ENCODE measurements at regions of chr7 and their contacts with region 1.

Region 1: DNA sequence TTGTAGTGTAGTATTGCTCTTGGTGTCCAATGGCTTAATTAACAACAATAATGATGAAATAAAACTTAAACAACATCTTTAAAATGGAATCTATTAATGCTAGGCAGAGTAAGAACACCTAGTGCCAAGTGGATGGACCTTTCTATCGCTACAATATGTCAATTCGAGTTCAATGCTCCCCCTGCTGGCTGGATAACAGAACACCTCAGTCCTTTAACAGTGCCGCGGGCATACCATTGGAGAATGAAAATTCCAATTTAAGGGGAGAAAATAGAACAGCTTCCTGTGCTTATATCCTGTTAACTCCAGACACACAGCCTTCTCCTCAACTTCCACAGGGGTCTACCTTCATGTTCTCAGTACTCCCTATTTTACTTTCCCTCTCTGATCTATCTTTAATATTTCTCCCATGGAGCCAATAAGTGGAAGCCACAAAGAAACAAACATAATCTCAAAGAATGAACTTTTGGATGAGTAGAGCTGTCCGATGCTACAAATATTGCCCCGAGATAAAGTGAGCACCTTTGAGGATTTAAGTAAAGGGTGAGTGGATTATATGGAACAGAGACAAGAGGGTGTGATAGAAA is 41.4 kb downstream of the COL1A2 start:
- DNase-seq: peak; percentile 66
- H3K4me3 Mint-ChIP-seq: no peak overlapping the region
- H3K27ac Mint-ChIP-seq: no peak overlapping the region
- H3K4me1 Mint-ChIP-seq: no peaks in the 10 kb centered on the region
- H3K27me3 Mint-ChIP-seq: no peaks in the 10 kb centered on the region
- CTCF ChIP-seq: peak; percentile 70

Region 2: GRCh38 chr7:94466516-94466915 is 30.4 kb after region 1 on chr7:
- CTCF ChIA-PET with region 1: no interaction called
- intact Hi-C with region 1: loop called (anchors 1 kb)
- DNase-seq: no peak
- H3K4me3 Mint-ChIP-seq: no peak overlapping the region
- H3K27ac Mint-ChIP-seq: no peak overlapping the region
- H3K4me1 Mint-ChIP-seq: no peaks in the 10 kb centered on the region
- H3K27me3 Mint-ChIP-seq: no peaks in the 10 kb centered on the region
- CTCF ChIP-seq: no peak

Region 3: DNA sequence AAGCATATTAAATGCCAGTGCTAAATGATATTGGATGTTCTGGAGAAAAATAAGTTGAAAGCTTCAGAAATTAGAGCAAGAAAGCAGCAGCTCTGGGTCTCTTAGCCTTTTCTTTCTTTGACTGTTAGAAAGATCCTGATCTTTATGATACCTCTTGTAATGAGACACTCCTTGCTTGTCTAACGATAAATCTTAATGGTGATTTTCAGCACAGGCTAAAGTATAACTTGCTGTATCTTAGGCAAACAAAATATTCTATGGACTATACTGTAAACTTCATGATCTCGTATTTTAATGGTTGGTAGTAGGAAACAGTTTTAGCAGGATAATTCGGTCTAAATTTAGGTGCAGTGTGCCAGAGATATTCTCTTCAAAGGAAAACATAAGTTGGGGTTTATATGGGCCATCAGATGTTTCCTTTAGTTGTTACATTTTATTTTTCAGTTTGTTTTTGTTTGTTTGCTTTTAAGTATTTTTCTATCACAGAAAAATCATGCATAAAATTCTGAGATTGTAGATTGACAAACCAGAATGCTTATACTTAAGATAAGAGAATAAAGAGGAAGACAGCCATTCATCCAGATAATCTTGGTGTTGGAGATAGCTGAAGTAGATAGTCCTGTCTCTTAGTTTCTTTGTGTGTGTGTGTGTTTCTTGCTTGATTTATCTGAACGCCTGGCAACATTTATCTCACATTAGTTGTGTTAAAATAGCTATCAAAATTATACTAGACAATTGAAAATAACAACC is 78.2 kb after region 1 on chr7:
- CTCF ChIA-PET with region 1: no interaction called
- intact Hi-C with region 1: no loop called
- DNase-seq: no peak
- H3K4me3 Mint-ChIP-seq: no peak overlapping the region
- H3K27ac Mint-ChIP-seq: no peak overlapping the region
- H3K4me1 Mint-ChIP-seq: peaks cover 6% of the 10 kb centered on the region
- H3K27me3 Mint-ChIP-seq: no peaks in the 10 kb centered on the region
- CTCF ChIP-seq: no peak

Region 4: DNA sequence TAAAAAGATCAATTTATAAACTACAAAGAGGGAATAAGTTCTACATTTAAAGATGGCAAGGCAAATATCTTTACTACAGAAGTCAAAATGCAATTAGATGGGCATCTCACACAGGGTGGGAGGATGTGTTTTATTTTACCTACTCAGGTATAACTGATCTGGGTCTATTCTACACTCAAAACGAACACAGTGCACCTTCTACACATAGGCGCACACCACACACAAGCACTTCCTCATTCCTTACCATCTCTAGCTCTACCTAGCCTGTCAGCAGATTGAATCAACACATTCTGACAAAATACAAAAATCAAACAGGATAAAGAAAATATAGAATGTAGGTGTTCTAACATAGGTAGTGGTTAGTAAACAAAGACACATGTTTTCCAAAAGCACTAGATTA is 155.1 kb after region 1 on chr7:
- CTCF ChIA-PET with region 1: no interaction called
- intact Hi-C with region 1: no loop called
- DNase-seq: no peak
- H3K4me3 Mint-ChIP-seq: no peak overlapping the region
- H3K27ac Mint-ChIP-seq: peak overlapping the region; percentile 66
- H3K4me1 Mint-ChIP-seq: peaks cover 13% of the 10 kb centered on the region
- H3K27me3 Mint-ChIP-seq: no peaks in the 10 kb centered on the region
- CTCF ChIP-seq: no peak